Heart right ventricle (tissue), 16 donors: ENCODE measurements at regions of chr20 and their contacts with region 1.

Region 1: DNA sequence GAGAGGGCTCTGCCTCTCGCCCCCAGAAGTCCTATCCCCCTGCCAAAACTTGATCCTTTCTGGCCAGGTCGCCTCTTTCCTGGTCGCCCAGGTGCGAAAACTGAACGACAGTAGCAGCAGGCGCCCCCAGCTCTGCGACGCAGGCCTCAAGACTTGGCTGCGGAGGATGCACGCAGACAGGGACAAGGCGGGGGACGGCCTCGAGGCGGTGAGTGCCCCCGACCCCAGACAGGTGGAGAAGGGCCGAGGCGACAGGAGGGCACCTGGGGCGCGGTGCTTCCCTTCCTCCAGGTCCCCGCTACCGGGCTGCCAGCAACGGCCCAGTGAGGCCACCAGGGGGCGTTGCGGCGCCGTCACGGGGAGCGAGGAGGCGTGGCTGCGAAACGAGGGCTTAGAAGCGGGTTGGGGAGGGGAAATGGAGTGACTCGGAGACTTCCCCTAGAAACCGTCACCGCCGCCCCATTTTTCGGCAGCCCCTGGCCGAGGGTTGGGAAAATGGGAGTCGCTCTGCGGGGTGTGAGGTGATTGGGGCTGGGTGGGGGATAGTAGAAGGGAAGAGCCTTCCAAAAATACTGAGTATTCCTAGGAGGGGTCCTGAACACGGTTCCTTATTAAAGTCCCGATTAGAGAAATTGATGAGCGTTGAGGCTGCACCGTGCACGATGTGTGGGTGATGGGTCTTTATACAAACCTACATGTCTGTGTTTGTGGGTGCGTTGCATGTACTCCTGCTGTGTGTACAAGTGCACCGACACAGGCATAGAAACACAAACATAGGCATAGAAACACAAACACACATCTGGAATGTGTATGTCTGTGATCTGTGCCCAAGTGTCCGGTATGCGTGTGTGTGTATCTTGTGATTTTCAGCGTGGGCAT is 44.6 kb downstream of the ARHGAP40 start:
- DNase-seq: peak; percentile 74 to 81
- ATAC-seq: peak; percentile 83 to 92 (median 90)
- H3K4me3 ChIP-seq: peak overlapping the region in 6 of 10 donors; percentile 6 to 29 (median 20)
- H3K27ac ChIP-seq: no peak overlapping the region
- H3K4me1 ChIP-seq: peaks cover 0 to 10% (median 4%) of the 10 kb centered on the region in 9 donors
- H3K27me3 ChIP-seq: peaks cover 0 to 93% (median 64%) of the 10 kb centered on the region in 7 donors
- CTCF ChIP-seq: peak; percentile 84 to 97 (median 96)

Region 2: DNA sequence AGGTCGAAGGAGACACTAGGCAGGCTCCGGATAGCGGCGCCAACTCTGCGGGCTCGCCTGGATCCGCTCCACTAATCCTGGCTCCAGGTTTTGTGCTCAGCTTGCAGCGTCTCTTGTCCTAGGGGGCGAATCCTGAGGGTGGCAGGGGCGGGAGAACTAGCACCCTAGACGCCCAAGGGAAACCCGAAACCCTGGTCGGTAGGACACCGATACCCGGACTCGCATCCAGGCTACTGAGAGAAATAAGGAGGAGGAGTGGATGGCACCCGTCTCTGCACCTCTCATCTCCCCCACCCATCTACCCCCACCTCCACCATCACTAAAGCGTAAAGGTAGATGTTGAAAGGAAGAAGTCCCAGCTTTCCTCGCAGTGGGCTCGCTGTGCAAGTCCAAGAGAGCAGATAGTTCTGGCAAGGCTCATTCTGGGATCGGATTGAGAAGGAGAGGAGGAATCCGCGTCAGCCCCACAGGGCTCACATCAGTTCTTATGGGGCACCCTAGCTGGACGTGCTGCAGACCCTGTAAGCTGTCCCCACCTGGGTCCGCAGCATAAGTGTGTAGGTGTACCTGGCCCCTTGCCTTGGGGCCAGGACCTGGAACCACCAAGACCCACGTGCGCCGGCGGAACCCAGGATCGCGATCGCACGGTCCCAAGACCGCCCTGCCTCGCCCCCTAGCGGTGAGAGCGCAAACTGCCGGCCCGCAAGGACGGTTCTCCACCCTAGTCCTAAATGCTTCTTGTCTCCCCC is 84.9 kb after region 1 on chr20:
- intact Hi-C with region 1: loop called in 9 of 10 experiments (anchors 1 to 5 kb)
- DNase-seq: peak; percentile 49 to 73
- ATAC-seq: peak; percentile 75 to 93 (median 81)
- H3K4me3 ChIP-seq: peak overlapping the region in 8 of 10 donors; percentile 13 to 46 (median 27)
- H3K27ac ChIP-seq: no peak overlapping the region
- H3K4me1 ChIP-seq: peaks cover 0 to 53% (median 40%) of the 10 kb centered on the region in 9 donors
- H3K27me3 ChIP-seq: peaks cover 45 to 100% (median 100%) of the 10 kb centered on the region in 7 donors
- CTCF ChIP-seq: peak; percentile 84 to 99 (median 97)

Region 3: GRCh38 chr20:38748097-38748860 is 102.1 kb after region 1 on chr20 and contains the start of gene ACTR5:
- intact Hi-C with region 1: loop called (anchors 1 to 5 kb)
- DNase-seq: peak; percentile 94 to 96
- ATAC-seq: peak; percentile 98 to 99 (median 99)
- H3K4me3 ChIP-seq: peak within 1 kb of the TSS; percentile 66 to 96 (median 82)
- H3K27ac ChIP-seq: peak within 1 kb of the TSS; percentile 36 to 89 (median 84)
- H3K4me1 ChIP-seq: peaks cover 0 to 21% (median 17%) of the 10 kb centered on the region in 9 donors
- H3K27me3 ChIP-seq: peaks cover 0 to 14% (median 8%) of the 10 kb centered on the region in 7 donors
- CTCF ChIP-seq: no peak
- total RNA-seq, gene ACTR5: 1.5 to 4.1 (median 2.8) TPM

Region 4: GRCh38 chr20:38790200-38791053 is 144.2 kb after region 1 on chr20:
- intact Hi-C with region 1: loop called in 1 of 10 experiments (anchors 5 kb)
- DNase-seq: no peak
- ATAC-seq: peak in 2 of 8 donors; percentile 50 to 51
- H3K4me3 ChIP-seq: no peak overlapping the region
- H3K27ac ChIP-seq: no peak overlapping the region
- H3K4me1 ChIP-seq: no peaks in the 10 kb centered on the region
- H3K27me3 ChIP-seq: peaks cover 0 to 7% (median 0%) of the 10 kb centered on the region in 7 donors
- CTCF ChIP-seq: peak; percentile 30 to 75 (median 61)

Region 5: GRCh38 chr20:38893565-38894090 is 247.4 kb after region 1 on chr20:
- intact Hi-C with region 1: loop called (anchors 5 to 10 kb)
- DNase-seq: peak; percentile 52 to 75
- ATAC-seq: peak; percentile 83 to 94 (median 90)
- H3K4me3 ChIP-seq: no peak overlapping the region
- H3K27ac ChIP-seq: peak overlapping the region in 2 of 10 donors; percentile 9 to 68
- H3K4me1 ChIP-seq: peaks cover 0 to 17% (median 8%) of the 10 kb centered on the region in 9 donors
- H3K27me3 ChIP-seq: peaks cover 0 to 15% (median 3%) of the 10 kb centered on the region in 7 donors
- CTCF ChIP-seq: peak; percentile 84 to 95 (median 93)

Region 6: DNA sequence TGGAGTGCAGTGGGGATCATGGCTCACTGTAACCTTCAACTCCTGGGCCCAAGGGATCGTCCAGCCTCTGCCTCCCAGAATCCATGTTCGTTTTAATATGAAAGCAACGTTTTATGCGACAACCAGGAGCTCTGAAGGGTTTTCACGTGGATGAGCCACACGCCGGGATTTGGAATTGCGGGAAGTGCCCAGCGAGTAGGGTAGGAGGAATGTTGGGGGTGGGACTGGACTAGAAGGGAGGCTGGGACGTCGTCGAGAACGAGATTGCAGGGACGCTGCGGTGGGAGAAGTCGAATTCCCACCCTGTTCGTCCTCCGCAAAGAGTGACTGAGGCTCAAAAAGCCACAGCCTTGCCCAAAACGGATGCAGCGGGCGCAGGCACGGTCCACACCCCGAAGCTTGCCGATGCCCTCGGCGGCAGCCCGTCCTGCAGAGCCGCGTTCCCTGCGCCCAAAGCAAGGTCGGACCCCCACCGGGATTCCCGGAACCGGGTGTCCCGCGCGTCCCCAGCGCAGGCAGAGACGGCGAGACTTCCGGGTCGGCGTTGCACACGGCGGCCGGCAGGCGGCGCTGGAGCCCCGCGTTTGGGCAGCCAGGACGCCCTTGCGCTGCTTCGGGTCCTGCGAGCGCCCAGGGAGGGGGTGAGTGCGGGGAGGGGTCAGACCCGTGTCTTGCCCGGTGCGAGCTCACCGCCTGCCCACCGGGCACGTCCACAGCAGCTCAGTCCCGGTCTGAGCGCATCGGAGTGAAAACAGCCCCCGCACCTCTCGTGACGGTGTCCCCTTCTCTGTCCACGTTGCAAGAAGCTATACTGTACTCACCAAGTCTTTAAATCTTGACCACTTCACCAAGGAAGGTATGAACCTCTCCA is 403.7 kb after region 1 on chr20:
- intact Hi-C with region 1: loop called in 5 of 10 experiments (anchors 2 to 10 kb)
- DNase-seq: peak; percentile 72 to 85
- ATAC-seq: peak; percentile 84 to 92 (median 88)
- H3K4me3 ChIP-seq: peak overlapping the region; percentile 19 to 80 (median 68)
- H3K27ac ChIP-seq: peak overlapping the region in 8 of 10 donors; percentile 12 to 71 (median 28)
- H3K4me1 ChIP-seq: peaks cover 0 to 16% (median 7%) of the 10 kb centered on the region in 9 donors
- H3K27me3 ChIP-seq: peaks cover 0 to 14% (median 0%) of the 10 kb centered on the region in 7 donors
- CTCF ChIP-seq: peak; percentile 95 to 100 (median 99)